Activated B cell treated with CpG ODN at 0.5 μM for 24 hours (primary cell): ENCODE measurements at regions of chr17 and their contacts with region 1.

Region 1: DNA sequence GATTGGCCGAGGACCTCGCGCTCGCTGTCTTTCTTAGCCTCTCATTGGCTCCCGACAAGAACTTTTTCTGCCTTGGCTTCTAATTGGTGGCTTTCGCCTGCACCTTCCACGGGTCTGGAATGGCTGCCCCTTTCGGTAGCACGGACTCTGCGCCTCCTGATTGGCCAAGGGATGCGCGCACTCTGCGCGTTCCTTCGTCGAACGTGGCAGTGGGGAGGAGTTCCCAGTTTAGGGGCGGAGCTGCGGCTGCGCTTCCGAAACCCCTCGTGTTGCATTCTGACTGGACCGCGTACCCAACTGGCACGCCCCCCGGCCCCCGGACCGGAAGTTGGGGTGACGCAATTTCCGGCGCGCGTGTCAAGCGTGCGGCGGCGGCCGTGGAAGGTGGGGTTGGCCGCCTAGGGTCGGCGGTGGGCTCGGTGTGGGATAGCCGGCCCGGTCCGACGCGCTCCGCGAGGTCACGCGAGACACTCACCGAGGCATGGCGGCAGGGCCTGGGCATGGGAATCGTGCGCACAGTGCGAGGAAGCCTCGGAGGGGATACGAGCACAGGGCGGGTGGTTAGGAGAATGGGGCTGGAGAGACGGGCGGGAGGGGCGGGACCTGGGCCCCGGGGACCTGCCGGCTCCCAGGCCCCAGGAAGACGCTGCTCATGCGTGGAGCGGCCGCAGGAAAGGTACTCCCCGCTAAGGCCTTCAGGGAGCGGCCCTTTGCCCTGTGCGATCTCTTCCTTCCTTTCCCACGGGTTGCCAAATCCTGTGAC is 602 bp upstream of the P4HB start:
- DNase-seq: peak; percentile 100
- ATAC-seq: peak; percentile 90
- H3K4me3 Mint-ChIP-seq: peak overlapping the region; percentile 89
- H3K27ac Mint-ChIP-seq: peak overlapping the region; percentile 94
- H3K4me1 Mint-ChIP-seq: peaks cover 30% of the 10 kb centered on the region
- H3K27me3 Mint-ChIP-seq: no peaks in the 10 kb centered on the region
- CTCF ChIP-seq: no peak

Region 2: GRCh38 chr17:81512560-81513371 is 348.2 kb before region 1 on chr17 and contains the start of gene ACTG1:
- CTCF ChIA-PET with region 1: no interaction called
- POLR2A ChIA-PET with region 1: interaction called, 5 read pairs
- intact Hi-C with region 1: loop called (anchors 10 kb)
- DNase-seq: peak; percentile 89
- ATAC-seq: peak; percentile 32
- H3K4me3 Mint-ChIP-seq: peak within 1 kb of the TSS; percentile 99
- H3K27ac Mint-ChIP-seq: peak within 1 kb of the TSS; percentile 94
- H3K4me1 Mint-ChIP-seq: peaks cover 54% of the 10 kb centered on the region
- H3K27me3 Mint-ChIP-seq: no peaks in the 10 kb centered on the region
- CTCF ChIP-seq: no peak
- total RNA-seq, gene ACTG1: 2,863 and 2,949 TPM in 2 replicates

Region 3: GRCh38 chr17:81702971-81703746 is 157.8 kb before region 1 on chr17 and contains the start of gene MRPL12:
- CTCF ChIA-PET with region 1: no interaction called
- POLR2A ChIA-PET with region 1: interaction called, 5 read pairs
- intact Hi-C with region 1: loop called (anchors 1 kb)
- DNase-seq: peak; percentile 84
- ATAC-seq: peak; percentile 94
- H3K4me3 Mint-ChIP-seq: peak within 1 kb of the TSS; percentile 89
- H3K27ac Mint-ChIP-seq: peak within 1 kb of the TSS; percentile 86
- H3K4me1 Mint-ChIP-seq: peaks cover 38% of the 10 kb centered on the region
- H3K27me3 Mint-ChIP-seq: no peaks in the 10 kb centered on the region
- CTCF ChIP-seq: no peak
- total RNA-seq, gene MRPL12: 68.8 and 69.8 TPM in 2 replicates

Region 4: GRCh38 chr17:81833160-81833920 is 27.6 kb before region 1 on chr17 and contains the start of gene MCRIP1:
- CTCF ChIA-PET with region 1: no interaction called
- POLR2A ChIA-PET with region 1: interaction called, 12 read pairs
- intact Hi-C with region 1: loop called (anchors 1 kb)
- DNase-seq: peak; percentile 97
- ATAC-seq: peak; percentile 81
- H3K4me3 Mint-ChIP-seq: peak within 1 kb of the TSS; percentile 92
- H3K27ac Mint-ChIP-seq: peak within 1 kb of the TSS; percentile 91
- H3K4me1 Mint-ChIP-seq: peaks cover 22% of the 10 kb centered on the region
- H3K27me3 Mint-ChIP-seq: no peaks in the 10 kb centered on the region
- CTCF ChIP-seq: no peak
- total RNA-seq, gene MCRIP1: 75.0 and 90.4 TPM in 2 replicates

Region 5: GRCh38 chr17:81917565-81918332 is 56.8 kb after region 1 on chr17 and contains the start of gene SIRT7:
- CTCF ChIA-PET with region 1: no interaction called
- POLR2A ChIA-PET with region 1: interaction called, 8 read pairs
- intact Hi-C with region 1: loop called (anchors 2 kb)
- DNase-seq: peak; percentile 74
- ATAC-seq: peak; percentile 88
- H3K4me3 Mint-ChIP-seq: peak within 1 kb of the TSS; percentile 88
- H3K27ac Mint-ChIP-seq: peak within 1 kb of the TSS; percentile 76
- H3K4me1 Mint-ChIP-seq: peaks cover 25% of the 10 kb centered on the region
- H3K27me3 Mint-ChIP-seq: no peaks in the 10 kb centered on the region
- CTCF ChIP-seq: no peak
- total RNA-seq, gene SIRT7: 57.6 and 66.4 TPM in 2 replicates

Region 6: GRCh38 chr17:82037113-82037888 is 176.4 kb after region 1 on chr17 and contains the start of gene DCXR:
- CTCF ChIA-PET with region 1: no interaction called
- POLR2A ChIA-PET with region 1: interaction called, 3 read pairs
- intact Hi-C with region 1: loop called (anchors 2 kb)
- DNase-seq: peak; percentile 95
- ATAC-seq: peak; percentile 93
- H3K4me3 Mint-ChIP-seq: peak within 1 kb of the TSS; percentile 86
- H3K27ac Mint-ChIP-seq: peak within 1 kb of the TSS; percentile 94
- H3K4me1 Mint-ChIP-seq: peaks cover 27% of the 10 kb centered on the region
- H3K27me3 Mint-ChIP-seq: no peaks in the 10 kb centered on the region
- CTCF ChIP-seq: no peak
- total RNA-seq, gene DCXR: 84.3 and 85.2 TPM in 2 replicates